ENCODE measurements at regions of chr10 and their contacts with region 1.

Region 1: DNA sequence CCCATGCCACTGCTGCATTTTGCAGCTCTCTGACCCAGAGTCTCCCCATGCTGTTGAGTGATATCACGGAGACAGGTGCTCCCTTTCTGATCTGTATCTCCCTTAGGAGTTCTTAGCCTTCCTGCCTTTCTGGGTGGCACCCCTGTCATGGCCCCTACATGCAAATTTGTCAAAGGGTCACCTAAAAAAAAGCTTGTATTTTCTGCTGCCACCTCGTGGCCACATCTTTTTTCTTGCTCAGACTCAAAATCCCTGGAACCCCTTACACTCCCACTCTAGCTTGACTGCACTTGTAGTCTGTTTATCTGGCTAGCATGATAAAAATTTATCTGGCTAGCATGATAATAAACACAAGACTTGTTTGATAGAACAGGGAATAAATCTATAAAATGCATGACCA is 809.1 kb downstream of the SORCS1 start:
- DNase-seq: no peak
- ATAC-seq: no peak
- H3K4me3 ChIP-seq: no peak overlapping the region
- H3K4me3 Mint-ChIP-seq: no peak overlapping the region
- H3K27ac ChIP-seq: no peak overlapping the region
- H3K27ac Mint-ChIP-seq: no peak overlapping the region
- H3K4me1 ChIP-seq: no peaks in the 10 kb centered on the region
- H3K4me1 Mint-ChIP-seq: no peaks in the 10 kb centered on the region
- H3K27me3 ChIP-seq: no peaks in the 10 kb centered on the region
- H3K27me3 Mint-ChIP-seq: no peaks in the 10 kb centered on the region

Region 2: DNA sequence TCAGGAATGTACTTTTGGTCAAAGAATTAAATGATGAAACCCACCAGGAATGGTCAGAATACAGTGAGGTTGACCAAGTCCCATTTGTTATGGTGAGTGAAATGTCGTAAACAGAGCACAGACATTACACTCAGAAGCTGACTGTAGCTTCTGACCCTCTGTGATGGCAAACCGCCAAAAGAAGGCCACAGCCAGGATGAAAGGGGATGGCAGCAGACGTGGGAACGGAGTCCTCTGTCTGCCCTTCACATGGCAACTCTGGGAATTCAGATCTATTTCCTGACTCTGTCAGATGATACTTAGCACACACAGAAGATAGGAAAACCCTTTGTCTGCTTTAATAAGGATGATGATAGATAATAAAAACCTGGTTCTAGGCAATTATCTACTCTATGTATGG is 957.2 kb before region 1 on chr10:
- CTCF ChIA-PET with region 1: no interaction called
- POLR2A ChIA-PET with region 1: no interaction called
- DNase-seq: no peak
- ATAC-seq: no peak
- H3K4me3 ChIP-seq: no peak overlapping the region
- H3K4me3 Mint-ChIP-seq: no peak overlapping the region
- H3K27ac ChIP-seq: no peak overlapping the region
- H3K27ac Mint-ChIP-seq: no peak overlapping the region
- H3K4me1 ChIP-seq: no peaks in the 10 kb centered on the region
- H3K4me1 Mint-ChIP-seq: no peaks in the 10 kb centered on the region
- H3K27me3 ChIP-seq: no peaks in the 10 kb centered on the region
- H3K27me3 Mint-ChIP-seq: peaks cover 0 to 3% of the 10 kb centered on the region in 2 donors

Region 3: DNA sequence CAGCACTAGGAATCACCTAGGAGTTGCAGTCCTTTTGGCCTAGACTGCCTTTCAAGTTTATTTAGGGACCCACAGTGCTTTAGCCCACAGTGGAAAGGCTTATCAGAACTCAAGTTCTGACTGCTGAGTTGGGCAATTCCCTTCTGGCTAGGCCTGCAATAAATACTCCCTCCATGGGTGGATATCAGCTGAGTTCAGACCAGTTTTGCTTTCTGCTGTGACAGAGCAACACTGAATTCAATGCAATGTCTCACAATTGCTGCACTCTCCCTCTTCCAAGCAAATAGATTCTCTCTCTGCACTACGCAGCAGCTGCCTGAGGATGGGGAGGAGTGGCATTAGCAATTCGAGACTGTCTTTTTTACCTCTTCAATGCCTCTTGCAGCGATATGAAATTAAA is 344.2 kb before region 1 on chr10:
- CTCF ChIA-PET with region 1: no interaction called
- POLR2A ChIA-PET with region 1: no interaction called
- DNase-seq: no peak
- ATAC-seq: no peak
- H3K4me3 ChIP-seq: no peak overlapping the region
- H3K4me3 Mint-ChIP-seq: no peak overlapping the region
- H3K27ac ChIP-seq: no peak overlapping the region
- H3K27ac Mint-ChIP-seq: no peak overlapping the region
- H3K4me1 ChIP-seq: no peaks in the 10 kb centered on the region
- H3K4me1 Mint-ChIP-seq: no peaks in the 10 kb centered on the region
- H3K27me3 ChIP-seq: no peaks in the 10 kb centered on the region
- H3K27me3 Mint-ChIP-seq: no peaks in the 10 kb centered on the region

Region 4: GRCh38 chr10:106311590-106311989 is 43.9 kb before region 1 on chr10:
- CTCF ChIA-PET with region 1: no interaction called
- POLR2A ChIA-PET with region 1: no interaction called
- DNase-seq: no peak
- ATAC-seq: no peak
- H3K4me3 ChIP-seq: no peak overlapping the region
- H3K4me3 Mint-ChIP-seq: no peak overlapping the region
- H3K27ac ChIP-seq: no peak overlapping the region
- H3K27ac Mint-ChIP-seq: no peak overlapping the region
- H3K4me1 ChIP-seq: no peaks in the 10 kb centered on the region
- H3K4me1 Mint-ChIP-seq: no peaks in the 10 kb centered on the region
- H3K27me3 ChIP-seq: no peaks in the 10 kb centered on the region
- H3K27me3 Mint-ChIP-seq: no peaks in the 10 kb centered on the region

Region 5: DNA sequence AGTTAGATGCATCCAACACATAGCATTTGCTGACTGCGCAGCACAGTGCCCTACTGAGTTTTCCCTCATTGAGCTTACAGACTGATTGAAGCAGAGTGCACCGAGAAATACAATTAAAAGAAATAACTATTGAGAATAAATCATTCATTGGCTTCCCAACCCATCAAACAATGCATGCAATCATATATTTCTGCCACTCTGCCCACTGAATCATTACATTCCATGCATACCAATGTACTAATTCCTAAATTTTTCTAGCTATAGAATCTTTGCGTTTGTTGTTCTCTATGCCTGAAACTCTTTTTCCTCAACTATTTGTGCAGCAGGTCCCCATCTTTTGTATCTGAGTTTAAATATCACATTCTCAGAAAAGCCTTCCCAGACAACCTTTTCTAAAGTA is 25.3 kb after region 1 on chr10:
- CTCF ChIA-PET with region 1: interaction called in 1 of 2 experiments, 13 read pairs
- POLR2A ChIA-PET with region 1: no interaction called
- DNase-seq: no peak
- ATAC-seq: no peak
- H3K4me3 ChIP-seq: no peak overlapping the region
- H3K4me3 Mint-ChIP-seq: no peak overlapping the region
- H3K27ac ChIP-seq: no peak overlapping the region
- H3K27ac Mint-ChIP-seq: no peak overlapping the region
- H3K4me1 ChIP-seq: no peaks in the 10 kb centered on the region
- H3K4me1 Mint-ChIP-seq: no peaks in the 10 kb centered on the region
- H3K27me3 ChIP-seq: no peaks in the 10 kb centered on the region
- H3K27me3 Mint-ChIP-seq: no peaks in the 10 kb centered on the region

Region 6: DNA sequence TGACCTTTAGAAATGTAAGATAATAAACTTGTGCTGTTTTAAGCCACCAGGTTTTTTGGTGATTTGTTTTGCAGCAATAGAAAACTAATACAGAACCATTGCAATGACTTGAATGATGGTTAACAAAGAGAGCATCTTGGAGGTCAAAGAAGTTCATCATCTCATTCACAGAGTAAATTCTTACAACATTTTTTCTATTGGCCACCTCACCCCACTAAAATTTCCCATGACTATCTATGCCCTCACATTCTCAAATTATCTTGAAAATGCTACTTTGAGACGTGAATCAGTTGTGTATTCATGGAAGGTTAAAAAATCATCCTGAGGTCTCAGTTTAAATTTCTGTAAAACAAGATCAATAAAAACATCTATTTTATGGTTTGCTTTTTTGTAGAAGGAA is 54.9 kb after region 1 on chr10:
- CTCF ChIA-PET with region 1: no interaction called
- POLR2A ChIA-PET with region 1: no interaction called
- DNase-seq: no peak
- ATAC-seq: no peak
- H3K4me3 ChIP-seq: no peak overlapping the region
- H3K4me3 Mint-ChIP-seq: no peak overlapping the region
- H3K27ac ChIP-seq: no peak overlapping the region
- H3K27ac Mint-ChIP-seq: no peak overlapping the region
- H3K4me1 ChIP-seq: no peaks in the 10 kb centered on the region
- H3K4me1 Mint-ChIP-seq: no peaks in the 10 kb centered on the region
- H3K27me3 ChIP-seq: no peaks in the 10 kb centered on the region
- H3K27me3 Mint-ChIP-seq: no peaks in the 10 kb centered on the region